ENCODE measurements at regions of chr5 and their contacts with region 1.

Region 1: GRCh38 chr5:67003935-67004729 is 192.5 kb downstream of the CD180 start:
- DNase-seq: peak; percentile 93
- H3K4me3 Mint-ChIP-seq: peak overlapping the region; percentile 96
- H3K27ac Mint-ChIP-seq: peak overlapping the region; percentile 97
- H3K4me1 Mint-ChIP-seq: peaks cover 36% of the 10 kb centered on the region
- H3K27me3 Mint-ChIP-seq: no peaks in the 10 kb centered on the region
- CTCF ChIP-seq: no peak

Region 2: GRCh38 chr5:66582499-66583165 is 421.5 kb before region 1 on chr5:
- CTCF ChIA-PET with region 1: no interaction called
- POLR2A ChIA-PET with region 1: no interaction called
- intact Hi-C with region 1: no loop called
- DNase-seq: peak; percentile 30
- H3K4me3 Mint-ChIP-seq: no peak overlapping the region
- H3K27ac Mint-ChIP-seq: no peak overlapping the region
- H3K4me1 Mint-ChIP-seq: peaks cover 8% of the 10 kb centered on the region
- H3K27me3 Mint-ChIP-seq: no peaks in the 10 kb centered on the region
- CTCF ChIP-seq: no peak

Region 3: DNA sequence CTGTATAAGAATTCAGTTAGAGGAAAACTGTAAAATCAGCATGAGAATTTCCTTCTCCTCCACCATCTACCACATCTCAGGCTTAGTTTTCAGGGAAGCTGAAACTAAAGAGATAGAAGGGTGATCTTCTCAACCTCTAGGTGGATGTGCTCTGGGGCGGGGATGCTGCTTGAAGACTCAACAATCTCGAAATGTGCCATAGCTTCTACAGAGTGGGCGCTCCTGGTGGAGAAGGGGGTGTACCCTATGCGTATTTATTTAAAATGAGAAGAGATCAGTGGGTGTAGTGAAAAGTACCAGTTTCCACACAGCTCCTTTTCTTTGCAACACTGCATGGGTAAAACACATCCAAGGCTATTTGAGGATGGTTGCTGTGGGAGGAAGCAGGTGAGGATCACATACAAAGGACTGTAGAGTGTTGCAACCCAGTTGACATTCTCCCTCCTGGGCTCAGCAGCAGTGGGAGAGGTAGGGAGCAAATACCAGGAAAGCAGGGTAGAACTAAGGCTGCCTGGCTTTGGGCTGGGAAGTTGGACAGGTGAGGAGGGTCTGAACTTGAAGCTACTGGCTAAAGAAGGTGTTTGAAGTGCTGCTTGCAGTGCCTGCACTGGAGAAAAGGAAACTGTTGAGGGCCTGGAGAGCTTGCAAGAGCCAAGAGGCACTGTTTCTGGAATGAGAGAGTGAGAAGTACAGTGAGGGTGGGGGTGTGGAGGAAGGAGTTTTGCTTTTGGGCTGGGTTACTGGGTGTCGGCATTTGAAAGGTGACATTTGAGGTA is 334.9 kb before region 1 on chr5:
- CTCF ChIA-PET with region 1: no interaction called
- POLR2A ChIA-PET with region 1: no interaction called
- intact Hi-C with region 1: no loop called
- DNase-seq: no peak
- H3K4me3 Mint-ChIP-seq: no peak overlapping the region
- H3K27ac Mint-ChIP-seq: no peak overlapping the region
- H3K4me1 Mint-ChIP-seq: no peaks in the 10 kb centered on the region
- H3K27me3 Mint-ChIP-seq: peaks cover 56% of the 10 kb centered on the region
- CTCF ChIP-seq: no peak

Region 4: DNA sequence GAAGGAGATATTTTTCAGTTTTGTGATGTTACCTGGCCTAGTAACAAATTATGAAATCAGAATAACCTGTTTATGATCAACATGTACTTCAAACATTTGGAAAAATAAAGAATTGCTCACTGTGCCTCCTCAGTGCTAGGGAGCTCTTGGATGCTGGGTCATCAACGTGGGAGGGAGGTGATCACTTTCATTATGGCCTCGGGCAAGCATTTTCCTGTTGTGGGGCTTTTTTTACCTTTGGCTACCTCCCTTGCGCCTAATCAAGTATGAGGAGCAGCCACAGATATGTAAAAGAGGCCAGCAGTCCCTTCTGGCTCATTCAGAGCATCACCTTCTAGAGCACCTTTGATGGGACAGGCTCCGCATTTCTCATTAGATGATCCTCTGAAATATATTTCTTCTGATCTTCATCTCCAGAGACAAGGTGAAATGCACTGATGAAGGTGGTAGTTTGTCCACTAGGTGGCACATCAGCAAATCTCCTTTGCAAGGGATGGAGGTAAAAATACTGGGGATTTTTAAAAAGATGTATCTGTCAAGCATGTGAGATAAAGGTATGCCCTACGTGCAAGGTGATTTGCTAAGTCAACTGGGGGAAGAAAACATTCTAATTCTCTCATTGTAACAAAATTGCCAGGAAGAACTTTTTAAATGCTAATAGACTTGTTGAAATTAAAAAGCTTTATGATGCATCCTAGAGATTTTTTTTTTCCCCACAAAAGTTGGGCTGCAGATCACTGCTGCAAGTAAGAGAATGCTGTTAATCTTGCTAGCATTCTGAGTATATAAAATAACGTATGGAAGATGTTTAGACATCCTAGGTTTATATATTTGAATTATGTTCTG is 189.8 kb before region 1 on chr5:
- CTCF ChIA-PET with region 1: no interaction called
- POLR2A ChIA-PET with region 1: interaction called, 5 read pairs
- intact Hi-C with region 1: loop called (anchors 1 kb)
- DNase-seq: peak; percentile 69
- H3K4me3 Mint-ChIP-seq: no peak overlapping the region
- H3K27ac Mint-ChIP-seq: no peak overlapping the region
- H3K4me1 Mint-ChIP-seq: peaks cover 6% of the 10 kb centered on the region
- H3K27me3 Mint-ChIP-seq: no peaks in the 10 kb centered on the region
- CTCF ChIP-seq: peak; percentile 41

Region 5: DNA sequence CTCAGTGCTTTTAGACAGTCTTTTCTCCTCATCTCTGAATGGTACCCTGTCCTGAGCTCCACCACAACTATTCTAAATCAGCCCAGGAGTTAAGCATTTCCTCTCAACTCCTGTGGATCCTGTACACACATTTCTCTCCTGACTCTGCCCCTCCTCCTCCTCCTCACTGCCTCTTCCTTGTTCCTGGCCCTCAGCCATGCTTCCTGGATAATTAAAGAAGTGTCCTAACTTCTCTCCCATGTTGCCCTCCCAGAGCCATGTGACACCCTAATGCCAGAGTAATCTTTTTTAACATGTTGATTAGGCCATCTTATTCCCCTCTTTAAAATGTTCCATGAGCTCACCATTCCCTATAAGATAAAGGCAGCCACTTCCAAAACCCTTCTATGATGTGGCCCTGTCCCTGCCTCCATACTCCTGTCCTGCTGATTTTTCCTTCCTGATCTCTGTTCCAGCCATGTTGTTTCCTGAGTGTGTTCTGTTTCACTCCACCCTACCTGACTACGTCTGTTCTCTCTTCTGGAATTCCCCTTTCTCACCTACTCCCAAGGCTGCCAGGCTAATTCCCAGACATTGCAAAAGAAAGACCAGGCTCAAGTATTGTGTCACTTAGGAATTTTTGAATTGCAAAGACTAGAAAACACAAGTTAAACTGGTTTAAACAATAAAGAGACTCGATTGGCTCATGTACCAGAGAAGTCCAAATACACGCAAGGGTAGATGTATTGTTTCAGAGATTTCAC is 112.8 kb before region 1 on chr5:
- CTCF ChIA-PET with region 1: no interaction called
- POLR2A ChIA-PET with region 1: interaction called, 32 read pairs
- intact Hi-C with region 1: no loop called
- DNase-seq: peak; percentile 95
- H3K4me3 Mint-ChIP-seq: peak overlapping the region; percentile 32
- H3K27ac Mint-ChIP-seq: peak overlapping the region; percentile 100
- H3K4me1 Mint-ChIP-seq: peaks cover 42% of the 10 kb centered on the region
- H3K27me3 Mint-ChIP-seq: no peaks in the 10 kb centered on the region
- CTCF ChIP-seq: no peak

Region 6: GRCh38 chr5:66952153-66952552 is 52.0 kb before region 1 on chr5:
- CTCF ChIA-PET with region 1: no interaction called
- POLR2A ChIA-PET with region 1: no interaction called
- intact Hi-C with region 1: no loop called
- DNase-seq: no peak
- H3K4me3 Mint-ChIP-seq: no peak overlapping the region
- H3K27ac Mint-ChIP-seq: no peak overlapping the region
- H3K4me1 Mint-ChIP-seq: no peaks in the 10 kb centered on the region
- H3K27me3 Mint-ChIP-seq: no peaks in the 10 kb centered on the region
- CTCF ChIP-seq: no peak

Region 7: GRCh38 chr5:66987949-66988838 is 15.9 kb before region 1 on chr5:
- CTCF ChIA-PET with region 1: interaction called, 4 read pairs
- POLR2A ChIA-PET with region 1: interaction called, 117 read pairs
- intact Hi-C with region 1: no loop called
- DNase-seq: peak; percentile 48
- H3K4me3 Mint-ChIP-seq: no peak overlapping the region
- H3K27ac Mint-ChIP-seq: no peak overlapping the region
- H3K4me1 Mint-ChIP-seq: peaks cover 5% of the 10 kb centered on the region
- H3K27me3 Mint-ChIP-seq: no peaks in the 10 kb centered on the region
- CTCF ChIP-seq: peak; percentile 54

Region 8: GRCh38 chr5:67032921-67033664 is 29.0 kb after region 1 on chr5:
- CTCF ChIA-PET with region 1: interaction called, 3 read pairs
- POLR2A ChIA-PET with region 1: interaction called, 21 read pairs
- intact Hi-C with region 1: no loop called
- DNase-seq: no peak
- H3K4me3 Mint-ChIP-seq: no peak overlapping the region
- H3K27ac Mint-ChIP-seq: no peak overlapping the region
- H3K4me1 Mint-ChIP-seq: peaks cover 48% of the 10 kb centered on the region
- H3K27me3 Mint-ChIP-seq: no peaks in the 10 kb centered on the region
- CTCF ChIP-seq: no peak

Region 9: DNA sequence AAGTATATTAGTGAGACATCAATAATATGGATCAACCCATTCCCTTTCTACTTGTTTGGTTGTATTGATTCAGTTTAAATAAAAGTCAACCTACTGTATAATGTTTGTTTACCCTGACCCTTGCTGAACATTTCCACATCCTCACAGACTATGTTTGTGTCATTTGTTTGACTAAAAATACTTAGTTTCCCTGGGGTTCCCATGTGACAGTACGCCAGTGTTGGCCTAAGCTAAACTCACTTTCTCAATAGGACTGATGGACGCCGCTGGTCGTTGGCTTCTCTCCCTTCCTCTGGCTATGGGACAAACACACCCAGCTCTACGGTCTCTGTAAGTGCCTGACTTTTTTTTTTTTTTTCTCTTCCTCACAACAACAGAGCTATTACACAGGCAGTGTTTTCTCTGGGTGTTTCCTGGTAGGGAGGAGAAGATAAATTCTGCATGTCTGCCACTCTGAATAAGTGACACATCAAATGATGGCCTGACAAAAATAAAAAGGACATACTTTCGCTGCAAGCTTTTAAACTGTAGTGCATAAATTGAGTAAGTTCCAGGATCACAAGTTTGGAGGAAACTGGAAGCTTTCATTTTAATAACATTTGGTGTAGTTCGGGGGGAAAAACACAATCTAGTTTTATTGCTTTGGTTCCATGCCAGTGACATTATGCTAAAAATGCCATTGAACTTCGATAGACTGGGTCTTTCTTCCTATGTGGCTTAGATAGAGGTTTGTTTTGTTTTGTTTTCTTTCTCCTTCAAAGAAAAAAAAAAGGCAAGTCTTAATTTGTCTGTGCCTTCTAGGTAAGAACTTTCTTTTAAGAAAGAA is 91.4 kb after region 1 on chr5:
- CTCF ChIA-PET with region 1: no interaction called
- POLR2A ChIA-PET with region 1: interaction called, 7 read pairs
- intact Hi-C with region 1: loop called (anchors 5 kb)
- DNase-seq: no peak
- H3K4me3 Mint-ChIP-seq: peak overlapping the region; percentile 24
- H3K27ac Mint-ChIP-seq: peak overlapping the region; percentile 94
- H3K4me1 Mint-ChIP-seq: peaks cover 27% of the 10 kb centered on the region
- H3K27me3 Mint-ChIP-seq: no peaks in the 10 kb centered on the region
- CTCF ChIP-seq: no peak

Region 10: GRCh38 chr5:67287510-67288268 is 283.6 kb after region 1 on chr5:
- CTCF ChIA-PET with region 1: no interaction called
- POLR2A ChIA-PET with region 1: no interaction called
- intact Hi-C with region 1: no loop called
- DNase-seq: peak; percentile 36
- H3K4me3 Mint-ChIP-seq: no peak overlapping the region
- H3K27ac Mint-ChIP-seq: no peak overlapping the region
- H3K4me1 Mint-ChIP-seq: peaks cover 41% of the 10 kb centered on the region
- H3K27me3 Mint-ChIP-seq: no peaks in the 10 kb centered on the region
- CTCF ChIP-seq: no peak